SK-N-SH (cell line): ENCODE measurements at regions of chr11 and their contacts with region 1.

Region 1: GRCh38 chr11:76114238-76114637 is 92.1 kb downstream of the WNT11 start:
- DNase-seq: no peak
- H3K4me3 ChIP-seq: no peak overlapping the region
- H3K27ac ChIP-seq: no peak overlapping the region
- H3K4me1 ChIP-seq: peaks cover 0 to 3% of the 10 kb centered on the region in 2 experiments; a peak in 1 of 4 replicates
- H3K27me3 ChIP-seq: no peaks in the 10 kb centered on the region
- CTCF ChIP-seq: no peak
- EP300 ChIP-seq: no peak
- RAD21 ChIP-seq: no peak

Region 2: DNA sequence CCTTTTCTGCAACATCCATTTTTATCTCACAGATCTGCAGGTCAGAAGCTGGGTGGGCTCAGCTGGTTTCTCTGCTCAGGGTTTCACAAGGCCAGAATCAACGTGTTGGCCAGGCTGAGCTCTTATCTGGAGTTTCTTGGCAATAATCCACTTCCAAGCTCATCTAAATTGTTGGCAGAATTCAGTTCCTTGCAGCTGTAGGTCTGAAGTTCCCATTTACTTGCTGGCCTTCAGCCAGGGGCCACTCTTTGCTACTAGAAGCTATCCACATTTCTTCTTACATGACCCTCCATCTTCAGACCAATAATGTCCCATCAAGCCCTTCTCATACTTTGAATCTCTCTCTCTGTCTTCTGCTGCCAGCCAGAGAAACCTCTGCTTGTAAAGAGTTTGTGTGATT is 11.4 kb before region 1 on chr11:
- CTCF ChIA-PET with region 1: interaction called, 12 read pairs
- POLR2A ChIA-PET with region 1: interaction called, 4 read pairs
- DNase-seq: no peak
- H3K4me3 ChIP-seq: no peak overlapping the region
- H3K27ac ChIP-seq: 0 out of 4 replicates have a peak overlapping the region, but pooled peaks of 1 of the 2 experiments have one; percentile 16
- H3K4me1 ChIP-seq: peaks cover 0 to 5% of the 10 kb centered on the region in 2 experiments; a peak in 2 of 4 replicates
- H3K27me3 ChIP-seq: no peaks in the 10 kb centered on the region
- CTCF ChIP-seq: no peak
- EP300 ChIP-seq: no peak
- RAD21 ChIP-seq: no peak